Panc1 (cell line): ENCODE measurements at regions of chr16 and their contacts with region 1.

Region 1: GRCh38 chr16:75293772-75294171 is 42.3 kb upstream of the BCAR1 start:
- DNase-seq: no peak
- ATAC-seq: no peak
- H3K4me3 ChIP-seq: no peak overlapping the region
- H3K27ac ChIP-seq: no peak overlapping the region
- H3K4me1 ChIP-seq: no peaks in the 10 kb centered on the region
- H3K27me3 ChIP-seq: no peaks in the 10 kb centered on the region
- CTCF ChIP-seq: no peak

Region 2: DNA sequence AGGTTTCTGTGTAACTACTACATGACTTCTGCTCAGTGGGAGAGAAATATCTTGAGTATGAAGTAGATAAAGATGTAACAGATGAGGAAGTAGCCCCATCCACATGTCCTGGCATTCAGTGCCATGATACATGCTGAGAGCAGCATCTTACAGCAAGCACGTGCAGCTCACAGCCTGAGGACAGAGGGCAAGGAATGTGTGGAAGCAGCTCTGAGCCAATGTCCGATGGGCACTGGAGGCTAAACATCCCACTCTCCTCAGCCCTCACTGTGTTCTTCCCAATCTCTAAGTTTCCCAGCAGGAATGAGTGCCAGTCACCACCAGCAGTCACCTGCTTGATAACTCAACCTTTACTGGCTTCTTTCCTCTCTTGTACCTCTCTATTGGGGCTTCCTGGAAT is 99.1 kb after region 1 on chr16:
- CTCF ChIA-PET with region 1: interaction called, 3 read pairs
- POLR2A ChIA-PET with region 1: interaction called, 12 read pairs
- in situ Hi-C with region 1: no loop called
- intact Hi-C with region 1: no loop called
- DNase-seq: no peak
- ATAC-seq: no peak
- H3K4me3 ChIP-seq: no peak overlapping the region
- H3K27ac ChIP-seq: no peak overlapping the region
- H3K4me1 ChIP-seq: no peaks in the 10 kb centered on the region
- H3K27me3 ChIP-seq: no peaks in the 10 kb centered on the region
- CTCF ChIP-seq: no peak